Caco-2 (cell line): ENCODE measurements at regions of chr7 and their contacts with region 1.

Region 1: DNA sequence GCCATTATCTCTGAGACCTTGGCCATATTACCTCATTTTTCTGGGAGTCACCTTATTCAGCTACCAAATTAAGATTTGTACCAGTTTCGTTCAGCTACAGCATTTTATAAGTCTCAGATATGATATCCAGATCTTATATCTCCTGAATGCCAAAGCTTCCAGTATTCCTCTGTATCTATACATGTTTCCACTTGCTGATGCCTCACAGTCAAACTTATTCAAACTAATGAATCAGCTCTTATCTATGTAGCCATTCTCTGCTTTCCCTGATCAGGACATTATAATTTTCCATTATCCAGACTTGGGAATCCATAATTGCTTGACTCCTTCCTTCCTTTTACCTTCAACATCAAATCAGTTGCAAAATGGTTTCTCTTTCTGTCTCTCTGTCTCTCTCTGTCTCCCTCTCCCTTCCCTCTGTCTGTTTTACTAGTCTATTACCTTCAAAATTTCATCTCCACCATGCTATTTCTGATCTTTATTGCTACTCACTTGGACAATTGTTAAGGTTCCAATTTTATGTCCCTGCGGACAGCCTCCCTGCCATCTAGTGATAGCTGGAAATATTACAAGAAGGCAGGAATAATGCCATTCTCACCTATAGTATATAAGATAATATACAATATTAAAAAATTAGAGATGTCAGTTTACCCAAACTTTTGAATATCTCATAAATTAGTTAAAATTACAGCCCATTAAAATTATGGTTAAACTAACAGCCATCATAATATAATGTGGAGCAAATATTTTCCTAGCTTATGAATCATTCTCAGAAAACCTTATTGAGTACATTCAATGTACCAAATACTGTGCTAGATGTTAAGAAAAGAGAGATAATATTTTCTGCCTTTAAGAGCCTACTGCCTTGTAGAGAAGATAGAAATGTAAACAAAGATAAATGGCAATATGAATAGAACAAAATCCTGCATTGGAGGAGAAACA is 89.8 kb downstream of the PCLO start:
- DNase-seq: peak in 1 of 2 experiments; percentile 7
- H3K4me3 ChIP-seq: no peak overlapping the region
- H3K4me3 Mint-ChIP-seq: no peak overlapping the region
- H3K27ac Mint-ChIP-seq: no peak overlapping the region
- H3K4me1 ChIP-seq: no peaks in the 10 kb centered on the region
- H3K4me1 Mint-ChIP-seq: no peaks in the 10 kb centered on the region
- H3K27me3 ChIP-seq: no peaks in the 10 kb centered on the region
- H3K27me3 Mint-ChIP-seq: no peaks in the 10 kb centered on the region
- CTCF ChIP-seq: peak; percentile 41 to 53

Region 2: GRCh38 chr7:83005410-83005809 is 67.4 kb before region 1 on chr7:
- CTCF ChIA-PET with region 1: no interaction called
- POLR2A ChIA-PET with region 1: no interaction called
- intact Hi-C with region 1: loop called (anchors 1 kb)
- DNase-seq: peak in 1 of 2 experiments; percentile 26
- H3K4me3 ChIP-seq: no peak overlapping the region
- H3K4me3 Mint-ChIP-seq: no peak overlapping the region
- H3K27ac Mint-ChIP-seq: no peak overlapping the region
- H3K4me1 ChIP-seq: no peaks in the 10 kb centered on the region
- H3K4me1 Mint-ChIP-seq: no peaks in the 10 kb centered on the region
- H3K27me3 ChIP-seq: no peaks in the 10 kb centered on the region
- H3K27me3 Mint-ChIP-seq: no peaks in the 10 kb centered on the region
- CTCF ChIP-seq: peak; percentile 22 to 40

Region 3: GRCh38 chr7:83629117-83629880 is 556.5 kb after region 1 on chr7:
- CTCF ChIA-PET with region 1: no interaction called
- POLR2A ChIA-PET with region 1: no interaction called
- intact Hi-C with region 1: no loop called
- DNase-seq: peak in 1 of 2 experiments; percentile 35
- H3K4me3 ChIP-seq: no peak overlapping the region
- H3K4me3 Mint-ChIP-seq: no peak overlapping the region
- H3K27ac Mint-ChIP-seq: no peak overlapping the region
- H3K4me1 ChIP-seq: no peaks in the 10 kb centered on the region
- H3K4me1 Mint-ChIP-seq: no peaks in the 10 kb centered on the region
- H3K27me3 ChIP-seq: no peaks in the 10 kb centered on the region
- H3K27me3 Mint-ChIP-seq: peaks cover 12% of the 10 kb centered on the region
- CTCF ChIP-seq: no peak